ENCODE measurements at regions of chr17 and their contacts with region 1.

Region 1: GRCh38 chr17:17972126-17972951 is at the starts of genes DRC3 and TOM1L2:
- DNase-seq: peak; percentile 96 to 100 (median 100)
- ATAC-seq: peak; percentile 95
- H3K4me3 ChIP-seq: peak within 1 kb of the TSS; percentile 70
- H3K4me3 Mint-ChIP-seq: peak within 1 kb of the TSS; percentile 93 to 98 (median 97)
- H3K27ac ChIP-seq: peak within 1 kb of the TSS; percentile 85
- H3K27ac Mint-ChIP-seq: peak within 1 kb of the TSS; percentile 89 to 98 (median 95)
- H3K4me1 ChIP-seq: peaks cover 14 to 26% of the 10 kb centered on the region in 2 donors
- H3K4me1 Mint-ChIP-seq: peaks cover 30 to 57% (median 45%) of the 10 kb centered on the region in 7 donors
- H3K27me3 ChIP-seq: no peaks in the 10 kb centered on the region
- H3K27me3 Mint-ChIP-seq: no peaks in the 10 kb centered on the region
- total RNA-seq, gene DRC3: 1.00 to 2.4 TPM in 2 of 5 experiments, not detected in the others
- total RNA-seq, gene TOM1L2: 35.1 to 84.1 (median 63.4) TPM

Region 2: GRCh38 chr17:17206124-17206912 is 766.0 kb before region 1 on chr17 and contains the start of gene PLD6:
- CTCF ChIA-PET with region 1: no interaction called
- POLR2A ChIA-PET with region 1: no interaction called
- intact Hi-C with region 1: loop called in 1 of 2 experiments (anchors 5 kb)
- DNase-seq: peak; percentile 88 to 96 (median 93)
- ATAC-seq: peak; percentile 92
- H3K4me3 ChIP-seq: peak within 1 kb of the TSS; percentile 68
- H3K4me3 Mint-ChIP-seq: peak within 1 kb of the TSS; percentile 87 to 93 (median 89)
- H3K27ac ChIP-seq: peak within 1 kb of the TSS; percentile 70
- H3K27ac Mint-ChIP-seq: peak within 1 kb of the TSS; percentile 75 to 96 (median 91)
- H3K4me1 ChIP-seq: peaks cover 17 to 30% of the 10 kb centered on the region in 2 donors
- H3K4me1 Mint-ChIP-seq: peaks cover 12 to 32% (median 19%) of the 10 kb centered on the region in 7 donors
- H3K27me3 ChIP-seq: no peaks in the 10 kb centered on the region
- H3K27me3 Mint-ChIP-seq: no peaks in the 10 kb centered on the region
- total RNA-seq, gene PLD6: 6.2 to 13.9 (median 12.1) TPM

Region 3: DNA sequence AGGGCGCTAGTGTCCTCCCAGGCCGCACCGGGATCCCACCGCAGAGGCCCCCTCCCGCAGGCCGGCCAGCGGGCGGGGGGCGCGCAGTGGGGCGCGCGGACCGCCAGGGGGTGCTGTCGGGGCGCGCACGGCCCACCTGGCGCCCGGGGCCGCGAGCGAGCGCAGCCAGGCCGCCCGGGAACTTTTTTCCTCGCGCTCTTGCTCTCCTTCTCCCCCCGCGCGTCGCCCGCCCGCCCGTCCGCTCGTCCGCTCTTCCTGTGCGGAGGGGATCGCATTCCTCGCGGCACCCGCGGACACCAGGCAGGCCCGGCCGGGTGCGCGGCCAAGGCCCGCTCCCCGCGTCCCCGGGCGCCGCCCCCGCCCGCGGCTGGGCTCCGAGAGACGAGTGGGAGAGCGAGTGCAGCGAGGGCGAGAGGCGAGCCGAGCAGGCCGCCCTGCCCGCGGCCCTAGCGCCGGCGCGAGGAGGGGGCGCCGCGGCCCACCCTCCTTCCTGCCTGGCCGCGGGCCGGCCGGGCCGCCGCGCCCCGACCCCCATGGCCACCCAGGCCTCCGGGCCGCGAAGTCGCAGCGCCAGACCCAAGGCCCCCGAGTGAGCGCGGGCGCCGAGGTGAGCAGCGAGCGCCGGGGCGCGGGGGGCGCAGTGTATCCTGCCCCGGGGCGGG is 291.0 kb before region 1 on chr17 and contains the start of gene RAI1:
- CTCF ChIA-PET with region 1: no interaction called
- POLR2A ChIA-PET with region 1: interaction called, 3 read pairs
- intact Hi-C with region 1: loop called (anchors 1 to 5 kb)
- DNase-seq: peak; percentile 64 to 87 (median 79)
- ATAC-seq: peak; percentile 82
- H3K4me3 ChIP-seq: peak within 1 kb of the TSS; percentile 62
- H3K4me3 Mint-ChIP-seq: peak within 1 kb of the TSS; percentile 84 to 92 (median 89)
- H3K27ac ChIP-seq: peak within 1 kb of the TSS; percentile 93
- H3K27ac Mint-ChIP-seq: peak within 1 kb of the TSS in 7 of 9 donors; percentile 59 to 90 (median 77)
- H3K4me1 ChIP-seq: peaks cover 7 to 17% of the 10 kb centered on the region in 2 donors
- H3K4me1 Mint-ChIP-seq: peaks cover 14 to 42% (median 37%) of the 10 kb centered on the region in 7 donors
- H3K27me3 ChIP-seq: no peaks in the 10 kb centered on the region
- H3K27me3 Mint-ChIP-seq: peaks cover 0 to 16% (median 0%) of the 10 kb centered on the region in 5 donors
- total RNA-seq, gene RAI1: 20.1 to 46.2 (median 23.6) TPM

Region 4: GRCh38 chr17:17836250-17836817 is 136.0 kb before region 1 on chr17:
- CTCF ChIA-PET with region 1: no interaction called
- POLR2A ChIA-PET with region 1: interaction called, 6 read pairs
- intact Hi-C with region 1: loop called (anchors 1 to 5 kb)
- DNase-seq: peak; percentile 93 to 99 (median 97)
- ATAC-seq: peak; percentile 85
- H3K4me3 ChIP-seq: peak overlapping the region; percentile 86
- H3K4me3 Mint-ChIP-seq: peak overlapping the region; percentile 85 to 95 (median 90)
- H3K27ac ChIP-seq: peak overlapping the region; percentile 99
- H3K27ac Mint-ChIP-seq: peak overlapping the region; percentile 94 to 99 (median 98)
- H3K4me1 ChIP-seq: peaks cover 18 to 60% of the 10 kb centered on the region in 2 donors
- H3K4me1 Mint-ChIP-seq: peaks cover 46 to 79% (median 75%) of the 10 kb centered on the region in 7 donors
- H3K27me3 ChIP-seq: no peaks in the 10 kb centered on the region
- H3K27me3 Mint-ChIP-seq: no peaks in the 10 kb centered on the region

Region 5: DNA sequence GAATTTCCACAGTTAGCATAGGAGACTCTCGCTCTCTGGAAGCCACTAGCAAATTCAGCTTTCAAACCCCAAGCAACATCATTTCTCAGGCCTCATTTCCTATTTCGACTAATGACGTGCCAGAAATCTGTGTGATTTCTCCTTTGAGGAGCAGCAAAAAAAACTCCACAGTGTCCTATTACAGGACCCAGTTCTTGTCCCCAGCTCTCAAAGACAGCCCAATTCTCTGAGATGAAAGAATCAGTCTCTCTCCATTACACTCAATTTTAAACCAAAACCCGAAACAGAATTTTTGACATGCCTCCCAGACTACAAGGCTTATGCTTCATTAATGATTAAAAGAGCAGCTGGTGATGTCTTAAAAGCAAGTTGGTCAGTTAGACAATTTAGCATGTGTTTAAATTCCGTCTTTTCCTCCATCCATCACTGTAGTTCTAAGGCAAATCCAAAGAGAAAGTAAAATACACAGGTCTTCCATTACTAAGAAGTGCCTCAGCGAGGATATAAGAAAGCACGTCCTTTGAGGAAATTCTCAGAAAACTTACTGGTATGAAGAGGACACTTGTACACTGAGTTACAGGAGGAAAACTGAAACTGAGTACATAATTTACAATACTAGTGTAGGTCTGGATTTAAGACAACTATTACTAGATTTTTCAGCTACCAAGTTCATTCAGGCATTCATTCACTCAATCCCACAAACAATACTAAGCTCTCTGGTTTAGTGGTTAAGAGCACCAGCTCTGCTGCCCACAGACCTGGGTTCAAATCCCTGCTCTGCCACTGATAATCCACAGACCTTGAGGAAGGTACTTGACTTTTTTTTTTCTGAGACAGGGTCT is 12.6 kb before region 1 on chr17:
- CTCF ChIA-PET with region 1: interaction called, 12 read pairs
- POLR2A ChIA-PET with region 1: interaction called, 62 read pairs
- intact Hi-C with region 1: loop called (anchors 1 kb)
- DNase-seq: peak in 7 of 9 donors; percentile 10 to 44 (median 27)
- ATAC-seq: peak; percentile 38
- H3K4me3 ChIP-seq: peak overlapping the region; percentile 37
- H3K4me3 Mint-ChIP-seq: peak overlapping the region; percentile 60 to 94 (median 86)
- H3K27ac ChIP-seq: peak overlapping the region; percentile 79
- H3K27ac Mint-ChIP-seq: peak overlapping the region; percentile 93 to 100 (median 98)
- H3K4me1 ChIP-seq: peaks cover 26 to 64% of the 10 kb centered on the region in 2 donors
- H3K4me1 Mint-ChIP-seq: peaks cover 50 to 87% (median 76%) of the 10 kb centered on the region in 7 donors
- H3K27me3 ChIP-seq: no peaks in the 10 kb centered on the region
- H3K27me3 Mint-ChIP-seq: no peaks in the 10 kb centered on the region

Region 6: GRCh38 chr17:18045691-18046090 is 73.4 kb after region 1 on chr17:
- CTCF ChIA-PET with region 1: no interaction called
- POLR2A ChIA-PET with region 1: no interaction called
- intact Hi-C with region 1: no loop called
- DNase-seq: no peak
- ATAC-seq: no peak
- H3K4me3 ChIP-seq: no peak overlapping the region
- H3K4me3 Mint-ChIP-seq: no peak overlapping the region
- H3K27ac ChIP-seq: no peak overlapping the region
- H3K27ac Mint-ChIP-seq: no peak overlapping the region
- H3K4me1 ChIP-seq: peaks cover 2 to 8% of the 10 kb centered on the region in 2 donors
- H3K4me1 Mint-ChIP-seq: peaks cover 17 to 27% (median 25%) of the 10 kb centered on the region in 7 donors
- H3K27me3 ChIP-seq: no peaks in the 10 kb centered on the region
- H3K27me3 Mint-ChIP-seq: no peaks in the 10 kb centered on the region

Region 7: GRCh38 chr17:18087610-18088491 is 115.5 kb after region 1 on chr17 and contains the start of gene DRG2:
- CTCF ChIA-PET with region 1: no interaction called
- POLR2A ChIA-PET with region 1: no interaction called
- intact Hi-C with region 1: loop called (anchors 5 kb)
- DNase-seq: peak; percentile 79 to 94 (median 85)
- ATAC-seq: peak; percentile 98
- H3K4me3 ChIP-seq: peak within 1 kb of the TSS; percentile 84
- H3K4me3 Mint-ChIP-seq: peak within 1 kb of the TSS; percentile 97 to 100 (median 98)
- H3K27ac ChIP-seq: peak within 1 kb of the TSS; percentile 85
- H3K27ac Mint-ChIP-seq: peak within 1 kb of the TSS; percentile 96 to 99 (median 98)
- H3K4me1 ChIP-seq: peaks cover 9 to 12% of the 10 kb centered on the region in 2 donors
- H3K4me1 Mint-ChIP-seq: peaks cover 19 to 35% (median 27%) of the 10 kb centered on the region in 7 donors
- H3K27me3 ChIP-seq: no peaks in the 10 kb centered on the region
- H3K27me3 Mint-ChIP-seq: no peaks in the 10 kb centered on the region
- total RNA-seq, gene DRG2: 39.6 to 54.7 (median 48.8) TPM

Measured in naive thymus-derived CD4-positive, alpha-beta T cell (primary cell).